ENCODE measurements at regions of chr7 and their contacts with region 1.

Region 1: DNA sequence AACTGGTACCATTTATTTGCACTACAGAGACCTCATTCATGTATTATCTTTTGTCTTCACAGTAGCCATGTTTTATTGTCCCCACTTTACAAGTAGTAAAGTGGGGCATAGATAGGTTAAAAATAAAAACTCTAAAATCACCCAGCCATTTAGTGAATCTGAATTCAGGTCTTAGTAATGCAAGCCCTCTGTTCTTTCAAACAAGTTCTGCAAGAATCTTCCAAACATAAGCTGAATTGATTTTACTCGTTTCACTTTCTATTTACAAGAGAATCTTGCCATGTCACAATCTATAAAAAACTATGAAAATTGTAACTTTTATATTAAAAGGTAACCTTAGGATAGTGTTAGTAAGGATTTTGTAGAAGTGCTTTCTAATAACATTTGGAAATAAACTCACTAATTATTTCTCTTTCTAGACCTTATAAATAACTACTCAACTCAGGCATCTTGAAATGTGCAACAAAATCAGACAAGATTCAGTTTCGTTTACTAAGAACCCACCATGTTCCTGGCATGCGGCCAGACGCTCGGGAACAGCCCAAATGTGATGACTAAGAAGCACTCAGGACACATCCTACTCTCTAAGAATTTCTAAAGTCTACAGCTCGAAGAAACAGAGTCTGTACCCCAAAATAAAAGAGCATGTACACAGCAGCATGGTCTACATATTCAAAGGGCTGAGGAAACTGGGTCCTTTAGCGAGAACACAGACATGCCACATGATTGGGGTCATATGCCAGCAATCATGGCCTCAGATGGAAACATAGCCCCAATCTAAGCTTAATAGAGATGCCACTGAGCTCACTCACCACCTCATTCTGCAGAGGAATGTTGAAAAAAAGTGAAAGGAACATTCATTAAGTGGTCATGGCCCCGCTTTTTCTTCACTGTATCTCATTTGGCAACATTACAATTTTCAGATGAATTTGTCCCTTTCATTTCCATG is 167.6 kb downstream of the AMPH start:
- DNase-seq: peak; percentile 92
- H3K4me3 Mint-ChIP-seq: peak overlapping the region; percentile 65
- H3K27ac Mint-ChIP-seq: peak overlapping the region; percentile 70
- H3K4me1 Mint-ChIP-seq: peaks cover 18% of the 10 kb centered on the region
- H3K27me3 Mint-ChIP-seq: peaks cover 8% of the 10 kb centered on the region

Region 2: DNA sequence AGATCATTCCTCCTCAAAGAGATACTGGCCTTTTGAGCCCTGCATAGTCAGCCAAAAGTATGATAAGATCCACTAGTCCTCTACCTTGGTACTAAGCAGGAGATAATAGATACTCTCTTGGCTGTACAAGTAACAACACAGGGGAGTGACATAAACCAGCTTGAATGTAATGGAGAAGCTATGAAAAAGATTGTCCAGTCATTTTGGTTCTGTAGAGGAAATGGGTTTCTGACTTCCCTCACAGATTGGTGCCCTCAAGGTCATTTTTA is 878.4 kb before region 1 on chr7:
- intact Hi-C with region 1: no loop called
- DNase-seq: no peak
- H3K4me3 Mint-ChIP-seq: no peak overlapping the region
- H3K27ac Mint-ChIP-seq: no peak overlapping the region
- H3K4me1 Mint-ChIP-seq: no peaks in the 10 kb centered on the region
- H3K27me3 Mint-ChIP-seq: peaks cover 24% of the 10 kb centered on the region

Region 3: DNA sequence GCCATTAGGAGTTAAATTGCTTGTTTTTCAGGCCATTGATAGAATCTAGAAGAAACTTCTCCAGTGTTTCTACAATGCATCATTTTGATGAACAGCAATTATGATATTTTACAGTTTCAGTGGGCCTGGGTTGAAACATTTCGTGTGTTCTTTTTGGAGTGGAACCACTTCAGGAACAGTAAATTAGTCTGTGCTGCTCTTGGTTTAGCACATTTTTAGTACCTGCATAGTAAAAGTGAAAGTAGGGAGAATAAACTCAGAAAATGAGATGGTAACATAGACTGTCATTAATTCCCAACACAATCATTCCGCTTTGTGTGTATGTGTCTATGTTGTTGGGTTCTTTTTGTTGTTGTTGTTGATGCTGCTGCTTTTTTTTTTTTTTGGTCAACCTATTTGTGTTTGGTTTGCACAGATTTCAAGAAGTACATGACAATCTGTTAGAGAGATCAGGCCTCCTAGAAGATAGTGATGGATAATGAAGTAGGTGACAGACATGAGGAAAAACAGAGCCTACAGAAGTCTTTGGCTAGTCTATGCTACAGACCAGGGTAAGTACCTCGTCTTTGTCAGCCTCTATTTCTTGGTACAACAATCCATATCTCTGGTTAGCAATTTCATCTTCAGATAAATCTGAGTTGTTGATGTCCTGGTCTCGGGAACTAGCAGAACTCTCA is 36.1 kb before region 1 on chr7:
- intact Hi-C with region 1: loop called (anchors 1 kb)
- DNase-seq: no peak
- H3K4me3 Mint-ChIP-seq: no peak overlapping the region
- H3K27ac Mint-ChIP-seq: no peak overlapping the region
- H3K4me1 Mint-ChIP-seq: peaks cover 24% of the 10 kb centered on the region
- H3K27me3 Mint-ChIP-seq: peaks cover 4% of the 10 kb centered on the region